Activated CD4-positive, alpha-beta T cell treated with anti-CD3 and anti-CD28 coated beads for 36 hours (primary cell): ENCODE measurements at regions of chr3 and their contacts with region 1.

Region 1: GRCh38 chr3:44729384-44729910 is at the start of gene ZNF501:
- DNase-seq: peak; percentile 92
- ATAC-seq: peak; percentile 98
- H3K4me3 Mint-ChIP-seq: peak within 1 kb of the TSS; percentile 83
- H3K27ac Mint-ChIP-seq: peak within 1 kb of the TSS; percentile 80
- H3K4me1 Mint-ChIP-seq: peaks cover 13% of the 10 kb centered on the region
- H3K27me3 Mint-ChIP-seq: no peaks in the 10 kb centered on the region
- total RNA-seq, gene ZNF501: 1.7 to 2.0 TPM

Region 2: DNA sequence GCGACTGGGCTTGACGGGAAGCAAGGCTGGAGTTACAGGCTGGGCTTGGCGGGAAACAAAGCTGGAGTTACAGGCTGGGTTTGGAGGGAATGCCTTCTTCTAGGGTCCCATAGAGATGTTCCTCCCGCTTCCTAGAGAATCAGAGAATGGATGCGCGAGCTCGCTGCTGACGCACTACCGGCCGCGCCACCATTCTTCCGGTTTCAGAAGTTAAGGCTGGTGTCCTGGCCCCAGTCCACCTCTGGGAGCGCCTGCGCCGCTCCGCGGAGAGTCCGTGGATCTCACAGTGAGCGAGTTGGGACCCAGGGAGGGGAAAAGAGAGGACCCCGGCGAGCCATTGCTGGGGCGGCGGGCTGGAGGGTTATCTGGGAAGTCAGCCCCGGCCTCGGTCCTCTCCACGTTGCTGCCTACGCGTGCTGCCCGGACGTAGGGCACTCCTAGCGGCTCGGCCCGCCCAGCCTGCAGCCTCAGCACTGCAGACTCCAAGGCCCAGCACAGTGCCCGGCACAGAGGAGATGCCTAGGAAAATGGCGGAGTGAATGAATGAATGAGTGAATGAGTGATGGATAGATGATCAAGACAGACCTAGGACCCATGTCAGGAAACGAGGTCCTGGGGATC is 16.9 kb before region 1 on chr3 and contains the start of gene ZNF502:
- CTCF ChIA-PET with region 1: interaction called, 8 read pairs
- POLR2A ChIA-PET with region 1: interaction called, 4 read pairs
- intact Hi-C with region 1: loop called (anchors 1 kb)
- DNase-seq: peak; percentile 80
- ATAC-seq: peak; percentile 92
- H3K4me3 Mint-ChIP-seq: peak within 1 kb of the TSS; percentile 84
- H3K27ac Mint-ChIP-seq: peak within 1 kb of the TSS; percentile 77
- H3K4me1 Mint-ChIP-seq: peaks cover 17% of the 10 kb centered on the region
- H3K27me3 Mint-ChIP-seq: peaks cover 19% of the 10 kb centered on the region
- total RNA-seq, gene ZNF502: 1.8 to 2.4 TPM

Region 3: DNA sequence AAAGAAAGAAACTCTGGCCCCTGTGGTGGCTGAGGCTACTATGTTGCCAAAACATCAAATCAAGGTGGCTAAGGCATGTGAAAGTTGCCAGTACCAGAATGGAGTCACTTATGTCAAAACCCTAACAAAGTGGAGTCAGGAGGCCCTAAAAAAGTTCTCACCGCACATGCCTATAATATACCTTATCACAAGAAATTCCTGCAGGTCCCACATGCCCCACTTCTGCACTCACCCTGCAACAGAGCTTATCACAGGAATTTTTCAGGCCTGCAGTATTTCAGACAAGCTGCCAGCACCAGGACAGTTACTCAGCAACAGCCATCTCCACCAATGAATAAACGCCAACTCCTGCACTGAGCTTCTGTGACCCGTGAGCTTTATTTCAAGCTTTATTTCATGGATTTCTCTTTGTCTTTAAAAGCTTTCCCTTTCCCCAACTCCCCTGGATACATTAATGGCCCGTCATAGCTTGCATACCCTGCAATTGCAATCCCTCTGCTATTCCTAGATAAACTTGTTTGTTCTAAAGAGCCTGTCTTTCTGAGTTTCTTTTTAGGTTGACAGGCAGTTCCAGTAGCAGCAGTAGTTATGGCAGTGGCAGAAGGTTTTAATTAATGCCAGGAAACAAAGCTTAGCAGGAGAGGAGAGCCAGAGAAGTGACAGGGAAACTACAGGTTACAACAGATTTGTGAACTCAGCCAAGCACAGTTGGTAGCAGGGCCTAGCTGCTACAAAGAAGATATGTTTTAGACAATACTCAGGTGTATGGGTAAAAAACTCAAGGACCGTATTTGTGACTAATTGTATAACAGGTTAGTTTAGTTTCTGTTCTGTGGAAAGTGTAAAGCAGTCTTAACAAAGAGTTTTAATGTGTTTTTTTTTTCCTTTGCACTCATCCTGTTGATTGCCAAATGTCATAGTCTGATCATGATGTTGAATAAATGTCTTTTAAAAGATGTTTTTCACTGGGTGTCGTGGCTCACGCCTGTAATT is 116.4 kb after region 1 on chr3:
- CTCF ChIA-PET with region 1: no interaction called
- POLR2A ChIA-PET with region 1: no interaction called
- intact Hi-C with region 1: no loop called
- DNase-seq: no peak
- ATAC-seq: no peak
- H3K4me3 Mint-ChIP-seq: no peak overlapping the region
- H3K27ac Mint-ChIP-seq: no peak overlapping the region
- H3K4me1 Mint-ChIP-seq: no peaks in the 10 kb centered on the region
- H3K27me3 Mint-ChIP-seq: no peaks in the 10 kb centered on the region

Region 4: DNA sequence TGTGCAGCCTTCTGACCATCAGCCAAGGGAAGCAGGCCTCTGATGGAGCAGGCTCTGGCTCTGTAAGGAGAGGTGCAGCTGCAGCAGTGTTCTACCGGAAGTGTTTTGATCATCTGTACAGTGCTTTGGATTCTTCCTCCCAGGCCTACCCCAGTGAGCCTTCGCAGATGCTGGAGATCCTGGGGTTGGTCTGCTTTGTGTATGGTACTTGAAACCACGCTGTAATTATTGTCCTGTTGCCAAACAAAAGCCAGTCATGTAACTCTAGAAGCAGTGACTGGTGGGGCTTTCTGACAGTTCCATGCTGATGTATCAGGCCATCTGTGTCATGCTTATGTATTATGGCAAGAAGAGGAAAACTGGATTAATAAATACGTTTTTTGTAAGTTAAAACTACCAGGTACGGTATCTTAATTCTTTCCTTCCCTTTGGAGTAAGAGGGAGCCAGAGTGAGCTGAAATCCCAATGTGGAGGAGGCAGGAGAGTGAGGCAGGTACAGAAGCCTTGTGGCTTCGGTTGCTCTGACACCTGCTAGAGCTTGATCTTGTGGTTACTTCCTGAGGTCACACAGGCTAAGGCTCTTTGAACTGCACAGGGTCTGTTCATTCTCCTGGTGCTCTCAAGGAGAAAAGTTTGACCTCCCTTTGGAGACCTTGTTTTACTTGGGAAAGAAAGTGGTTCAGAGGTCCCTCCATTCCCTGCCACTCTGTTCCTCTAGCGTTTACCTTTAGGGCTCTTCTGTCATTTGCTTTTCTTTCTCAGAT is 136.0 kb after region 1 on chr3:
- CTCF ChIA-PET with region 1: no interaction called
- POLR2A ChIA-PET with region 1: no interaction called
- intact Hi-C with region 1: no loop called
- DNase-seq: no peak
- ATAC-seq: no peak
- H3K4me3 Mint-ChIP-seq: no peak overlapping the region
- H3K27ac Mint-ChIP-seq: no peak overlapping the region
- H3K4me1 Mint-ChIP-seq: peaks cover 38% of the 10 kb centered on the region
- H3K27me3 Mint-ChIP-seq: no peaks in the 10 kb centered on the region